Activated T-helper 1 cell treated with anti-CD3 and anti-CD28 coated beads, Interleukin-12 subunit alpha, Interleukin-12 subunit beta, Interleukin-2, Interleukin-4 antibody, amounts not matched to agents 30 ng/mL and 10 ng/mL and 1 ng/mL, durations not matched to agents 14 hours and 24 hours and 36 hours (primary cell): ENCODE measurements at regions of chr14 and their contacts with region 1.

Region 1: GRCh38 chr14:103333754-103334643 is at the start of gene EIF5:
- DNase-seq: peak; percentile 98
- H3K4me3 Mint-ChIP-seq: peak within 1 kb of the TSS; percentile 90
- H3K27ac Mint-ChIP-seq: peak within 1 kb of the TSS; percentile 97
- H3K4me1 Mint-ChIP-seq: peaks cover 43% of the 10 kb centered on the region
- H3K27me3 Mint-ChIP-seq: peaks cover 7% of the 10 kb centered on the region
- total RNA-seq, gene EIF5: 279 and 292 TPM in 2 replicates

Region 2: GRCh38 chr14:102139248-102140026 is 1194.6 kb before region 1 on chr14 and contains the start of gene WDR20:
- intact Hi-C with region 1: loop called (anchors 5 kb)
- DNase-seq: peak; percentile 99
- H3K4me3 Mint-ChIP-seq: peak within 1 kb of the TSS; percentile 94
- H3K27ac Mint-ChIP-seq: peak within 1 kb of the TSS; percentile 91
- H3K4me1 Mint-ChIP-seq: peaks cover 19% of the 10 kb centered on the region
- H3K27me3 Mint-ChIP-seq: no peaks in the 10 kb centered on the region
- total RNA-seq, gene WDR20: 33.9 and 34.2 TPM in 2 replicates

Region 3: GRCh38 chr14:102524466-102525218 is 809.4 kb before region 1 on chr14:
- intact Hi-C with region 1: loop called (anchors 5 kb)
- DNase-seq: peak; percentile 94
- H3K4me3 Mint-ChIP-seq: peak overlapping the region; percentile 92
- H3K27ac Mint-ChIP-seq: peak overlapping the region; percentile 88
- H3K4me1 Mint-ChIP-seq: peaks cover 27% of the 10 kb centered on the region
- H3K27me3 Mint-ChIP-seq: peaks cover 7% of the 10 kb centered on the region

Region 4: DNA sequence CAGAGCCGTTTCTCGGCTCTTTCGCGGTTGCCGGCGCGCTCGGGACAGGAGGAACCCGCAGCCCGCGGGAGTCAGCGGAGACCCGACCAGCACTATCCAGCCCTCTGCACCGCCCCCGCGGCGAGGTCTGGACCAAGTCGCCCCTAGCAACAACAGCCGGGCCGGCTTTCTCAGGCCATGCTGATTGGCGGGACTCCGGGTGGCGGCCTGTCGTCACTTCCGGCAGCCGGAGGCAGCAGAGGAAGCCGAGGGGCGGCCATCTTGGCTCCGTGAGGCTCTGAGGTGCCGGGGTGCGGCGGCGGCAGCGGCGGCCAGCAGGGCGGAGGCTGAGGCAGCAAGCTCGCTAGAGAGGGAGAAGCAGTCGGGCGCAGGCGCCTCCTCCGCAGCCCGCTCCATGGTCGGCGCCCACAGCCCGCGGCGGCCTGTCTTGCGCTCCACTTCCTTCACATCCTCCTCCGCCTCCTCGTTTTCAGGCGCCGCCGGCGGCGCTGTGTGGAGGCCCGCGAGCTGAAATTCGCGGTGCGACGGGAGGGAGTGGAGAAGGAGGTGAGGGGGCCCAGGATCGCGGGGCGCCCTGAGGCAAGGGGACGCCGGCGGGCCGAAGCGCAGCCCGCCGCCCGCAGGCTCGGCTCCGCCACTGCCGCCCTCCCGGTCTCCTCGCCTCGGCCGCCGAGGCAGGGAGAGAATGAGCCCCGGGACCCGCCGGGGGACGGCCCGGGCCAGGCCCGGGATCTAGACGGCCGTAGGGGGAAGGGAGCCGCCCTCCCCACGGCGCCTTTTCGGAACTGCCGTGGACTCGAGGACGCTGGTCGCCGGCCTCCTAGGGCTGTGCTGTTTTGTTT is 51.4 kb after region 1 on chr14 and contains the start of gene MARK3:
- intact Hi-C with region 1: loop called (anchors 1 kb)
- DNase-seq: peak; percentile 97
- H3K4me3 Mint-ChIP-seq: peak within 1 kb of the TSS; percentile 99
- H3K27ac Mint-ChIP-seq: peak within 1 kb of the TSS; percentile 98
- H3K4me1 Mint-ChIP-seq: peaks cover 57% of the 10 kb centered on the region
- H3K27me3 Mint-ChIP-seq: peaks cover 5% of the 10 kb centered on the region
- total RNA-seq, gene MARK3: 89.6 and 90.6 TPM in 2 replicates

Region 5: DNA sequence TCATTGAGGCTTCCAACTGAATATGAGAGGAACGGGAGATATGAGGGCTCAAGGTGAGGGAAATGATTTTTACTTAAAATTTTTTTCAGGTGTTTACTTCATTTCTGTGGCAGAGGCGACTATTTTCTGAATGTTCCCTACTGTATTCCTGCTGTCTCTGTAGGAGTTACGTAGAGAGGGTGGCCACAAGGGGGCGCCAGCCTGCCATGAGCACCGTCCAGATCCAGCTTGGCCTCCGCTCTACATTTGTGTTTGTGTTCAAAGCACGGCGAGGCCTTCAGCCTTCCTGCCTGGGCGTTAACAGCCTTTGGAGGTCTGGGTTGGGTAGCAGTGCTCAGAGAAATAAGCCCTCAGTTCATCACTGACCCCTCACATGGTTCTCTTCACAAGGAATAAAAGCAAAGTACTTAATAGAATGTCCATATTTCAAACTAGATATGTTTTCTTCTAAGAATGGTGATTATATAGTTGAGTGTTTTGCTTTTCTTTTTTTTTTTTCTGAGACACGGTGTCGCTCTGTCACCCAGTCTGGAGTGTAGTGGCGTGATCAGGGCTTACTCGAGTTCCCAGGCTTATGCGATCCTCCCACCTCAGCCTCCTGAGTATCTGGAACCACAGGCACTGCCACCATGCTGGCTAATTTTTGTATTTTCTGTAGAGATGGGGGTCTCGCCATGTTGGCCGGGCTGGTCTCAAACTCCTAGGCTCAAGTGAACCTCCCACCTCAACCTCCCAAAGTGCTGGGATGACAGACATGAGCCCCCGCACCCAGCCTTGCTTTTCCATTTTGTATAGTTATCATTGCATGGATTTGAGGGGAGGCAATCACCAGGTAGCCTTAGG is 166.4 kb after region 1 on chr14:
- intact Hi-C with region 1: loop called (anchors 5 kb)
- DNase-seq: peak; percentile 57
- H3K4me3 Mint-ChIP-seq: no peak overlapping the region
- H3K27ac Mint-ChIP-seq: peak overlapping the region; percentile 16
- H3K4me1 Mint-ChIP-seq: peaks cover 9% of the 10 kb centered on the region
- H3K27me3 Mint-ChIP-seq: no peaks in the 10 kb centered on the region

Region 6: DNA sequence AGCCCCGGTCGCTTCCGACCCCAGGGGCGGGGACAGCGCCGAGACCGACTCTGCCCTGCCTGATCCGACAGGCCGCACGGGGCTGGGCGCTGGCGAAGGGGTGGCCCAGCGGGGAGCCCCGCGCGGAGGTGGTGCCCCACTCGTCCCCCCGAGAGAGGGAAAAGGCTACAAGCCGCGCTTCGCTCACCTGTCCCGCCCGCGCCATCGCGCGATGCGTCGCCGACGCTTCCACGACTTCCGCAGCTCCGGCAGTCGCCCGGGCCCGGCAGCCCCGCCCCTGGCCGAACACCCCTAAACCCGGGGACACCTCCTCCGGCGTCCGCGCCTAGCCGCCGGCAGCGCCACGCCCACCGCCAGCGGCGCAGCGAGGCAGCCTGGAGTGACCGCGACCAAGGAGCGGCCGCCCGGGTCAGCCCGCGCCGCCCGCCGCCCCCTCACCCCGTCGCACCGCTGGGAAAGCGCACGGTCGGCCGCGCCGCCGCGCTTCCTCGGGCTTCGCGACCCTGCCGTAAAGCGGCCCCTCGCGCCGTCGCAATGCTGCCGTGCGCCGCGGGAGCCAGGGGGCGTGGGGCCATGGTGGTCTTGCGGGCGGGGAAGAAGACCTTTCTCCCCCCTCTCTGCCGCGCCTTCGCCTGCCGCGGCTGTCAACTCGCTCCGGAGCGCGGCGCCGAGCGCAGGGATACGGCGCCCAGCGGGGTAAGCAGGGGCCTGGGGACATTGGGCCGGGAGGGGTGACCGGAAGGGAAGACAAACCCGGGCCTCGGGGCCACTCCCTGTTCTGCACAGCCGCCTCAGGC is 228.6 kb after region 1 on chr14 and contains the starts of genes BAG5 and COA8:
- intact Hi-C with region 1: loop called (anchors 2 kb)
- DNase-seq: peak; percentile 83
- H3K4me3 Mint-ChIP-seq: peak within 1 kb of the TSS; percentile 96
- H3K27ac Mint-ChIP-seq: peak within 1 kb of the TSS; percentile 94
- H3K4me1 Mint-ChIP-seq: peaks cover 29% of the 10 kb centered on the region
- H3K27me3 Mint-ChIP-seq: no peaks in the 10 kb centered on the region
- total RNA-seq, gene BAG5: 33.8 and 34.1 TPM in 2 replicates
- total RNA-seq, gene COA8: 37.2 and 39.7 TPM in 2 replicates

Region 7: DNA sequence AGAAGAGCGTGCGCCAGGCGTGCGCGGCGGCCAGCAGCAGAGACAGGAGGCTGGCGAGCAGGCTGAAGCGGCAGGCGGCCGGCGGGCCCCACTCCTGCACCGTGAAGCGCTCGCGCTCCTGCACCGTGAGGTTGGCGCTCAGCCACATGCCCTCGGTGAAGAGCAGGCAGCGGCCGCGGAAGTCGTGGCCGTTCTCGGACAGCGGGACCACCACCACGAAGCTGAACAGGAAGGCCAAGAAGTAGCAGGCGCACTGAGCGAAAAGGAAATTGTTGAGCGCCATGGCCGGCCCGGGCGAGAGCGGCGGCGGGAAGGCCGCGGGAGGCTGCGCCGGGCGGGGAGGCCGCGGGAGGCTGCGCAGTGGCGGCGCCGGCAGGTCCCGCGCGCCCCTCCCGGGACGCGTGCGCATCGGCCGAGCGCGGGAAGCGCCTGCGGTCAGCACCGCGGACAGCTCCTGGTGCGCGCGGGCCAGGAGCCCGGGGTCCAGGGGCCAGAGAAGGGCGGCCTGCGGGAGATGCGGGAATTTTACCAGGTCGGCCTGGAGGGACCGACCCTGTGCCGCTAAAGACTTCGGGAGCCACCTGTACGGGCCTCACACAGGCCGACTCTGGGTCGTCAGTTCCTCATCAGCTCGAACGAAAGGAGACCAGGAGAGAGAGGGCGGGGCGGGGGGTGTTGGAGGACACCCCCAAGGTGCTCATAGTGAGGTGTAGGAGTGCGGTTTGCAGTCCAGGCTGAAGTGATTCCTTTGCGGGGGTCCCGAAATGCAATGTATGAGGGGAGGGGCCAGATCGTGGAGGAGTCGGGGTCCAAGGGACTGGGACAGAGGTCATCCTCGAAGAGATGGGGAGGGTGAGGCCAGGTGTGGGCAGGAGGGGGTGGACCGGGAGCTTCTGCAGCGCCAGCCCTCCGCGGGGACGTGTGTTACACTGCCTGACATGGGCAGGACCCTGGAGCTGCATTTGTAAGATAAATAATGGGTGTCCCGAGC is 1270.8 kb after region 1 on chr14 and contains the start of gene TMEM179:
- intact Hi-C with region 1: no loop called
- DNase-seq: no peak
- H3K4me3 Mint-ChIP-seq: no peak within 1 kb of the TSS
- H3K27ac Mint-ChIP-seq: no peak within 1 kb of the TSS
- H3K4me1 Mint-ChIP-seq: no peaks in the 10 kb centered on the region
- H3K27me3 Mint-ChIP-seq: peaks cover 29% of the 10 kb centered on the region
- total RNA-seq, gene TMEM179: 0.12 and 0.36 TPM in 2 replicates